ENCODE measurements at regions of chr10 and their contacts with region 1.

Region 1: DNA sequence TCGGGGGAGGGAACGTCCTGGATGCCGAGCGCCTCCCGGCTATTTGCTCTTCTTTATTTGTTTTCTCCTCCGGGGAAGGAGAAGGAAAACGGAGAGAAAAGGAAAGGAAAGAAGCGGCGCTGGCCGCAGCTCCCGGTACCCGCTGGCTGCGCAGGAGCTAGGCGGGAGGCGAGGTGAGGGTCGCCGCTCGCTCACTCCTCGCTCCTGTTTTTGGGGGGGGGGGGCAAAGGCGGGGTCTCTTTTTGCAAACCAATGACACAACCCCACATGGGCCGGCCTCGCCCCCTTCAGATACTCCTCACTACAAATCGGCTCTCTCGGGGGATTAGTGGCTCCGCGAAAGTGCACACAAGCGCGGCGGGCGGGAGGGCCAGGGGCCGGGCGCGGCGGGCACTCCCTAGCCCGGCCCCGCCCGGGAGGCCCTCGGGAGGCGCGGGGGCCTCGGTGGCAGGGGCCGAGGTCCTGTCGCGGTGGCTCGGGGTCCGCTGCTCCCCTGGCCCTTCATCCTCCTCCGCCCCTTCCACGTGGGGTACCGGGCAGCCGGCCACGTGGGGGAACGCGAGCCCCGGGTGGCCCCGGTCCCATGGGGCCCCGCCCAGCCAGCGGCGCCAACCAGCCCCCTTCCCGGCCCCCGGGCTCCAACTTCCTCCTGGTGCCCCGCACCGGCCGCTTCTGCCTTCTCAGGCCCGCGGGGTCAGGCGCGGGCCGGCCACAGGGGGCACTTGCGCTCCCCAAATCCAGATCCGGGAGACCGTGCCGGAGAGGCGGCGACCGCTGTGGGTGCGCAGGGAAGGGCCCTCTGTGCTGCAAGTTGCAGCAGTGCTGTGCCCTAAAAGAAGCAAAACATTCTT is 718 bp upstream of the CTBP2 start:
- H3K4me3 Mint-ChIP-seq: peak overlapping the region; percentile 87
- H3K27ac Mint-ChIP-seq: peak overlapping the region; percentile 89
- H3K4me1 Mint-ChIP-seq: peaks cover 14% of the 10 kb centered on the region
- H3K27me3 Mint-ChIP-seq: peaks cover 19% of the 10 kb centered on the region

Region 2: DNA sequence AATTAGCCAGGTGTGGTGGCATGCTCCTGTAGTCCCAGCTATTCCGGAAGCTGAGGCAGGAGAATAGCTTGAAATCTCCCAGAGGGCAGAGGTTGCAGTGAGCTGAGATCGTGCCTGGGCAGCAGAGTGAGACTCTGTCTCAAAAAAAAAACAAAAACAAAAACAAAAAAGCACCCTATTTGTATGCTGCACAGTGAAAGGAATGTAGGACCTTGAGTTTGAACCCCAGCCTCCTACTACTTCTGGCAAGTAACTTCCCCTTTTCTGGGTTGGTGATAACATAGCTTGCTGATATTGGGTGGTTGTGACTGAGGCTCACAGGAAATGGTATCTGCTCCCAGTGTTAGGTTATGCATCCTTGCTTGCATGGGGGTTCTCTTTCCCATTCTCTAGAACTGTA is 1801.5 kb before region 1 on chr10:
- intact Hi-C with region 1: no loop called
- H3K4me3 Mint-ChIP-seq: no peak overlapping the region
- H3K27ac Mint-ChIP-seq: no peak overlapping the region
- H3K4me1 Mint-ChIP-seq: no peaks in the 10 kb centered on the region
- H3K27me3 Mint-ChIP-seq: peaks cover 14% of the 10 kb centered on the region

Region 3: GRCh38 chr10:125048101-125048864 is 112.8 kb before region 1 on chr10:
- intact Hi-C with region 1: loop called (anchors 5 kb)
- H3K4me3 Mint-ChIP-seq: no peak overlapping the region
- H3K27ac Mint-ChIP-seq: no peak overlapping the region
- H3K4me1 Mint-ChIP-seq: peaks cover 51% of the 10 kb centered on the region
- H3K27me3 Mint-ChIP-seq: no peaks in the 10 kb centered on the region

Region 4: DNA sequence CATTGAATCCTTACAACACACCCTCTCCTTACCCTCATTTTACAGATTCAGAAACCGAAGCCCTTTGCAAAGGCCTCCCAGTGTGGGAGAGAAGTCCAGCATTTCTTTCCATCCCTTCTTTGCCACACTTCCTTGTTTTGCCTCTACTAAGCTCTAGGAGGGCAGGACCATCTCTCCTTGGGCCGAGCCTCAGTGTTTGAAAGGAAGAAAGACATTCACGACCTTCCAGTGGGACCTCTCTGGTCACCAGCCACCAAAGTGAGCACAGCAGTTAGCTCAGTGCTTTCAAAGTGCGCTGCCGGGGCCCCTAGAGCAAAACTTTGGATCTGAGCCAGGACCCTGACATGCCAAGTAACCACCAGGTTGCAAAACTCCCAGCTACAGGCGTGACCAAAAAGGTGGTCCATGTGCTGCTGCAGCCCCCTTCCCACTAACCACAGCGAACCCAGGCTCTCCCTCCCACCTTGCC is 13.1 kb before region 1 on chr10:
- intact Hi-C with region 1: loop called (anchors 1 kb)
- H3K4me3 Mint-ChIP-seq: peak overlapping the region; percentile 55
- H3K27ac Mint-ChIP-seq: peak overlapping the region; percentile 82
- H3K4me1 Mint-ChIP-seq: peaks cover 89% of the 10 kb centered on the region
- H3K27me3 Mint-ChIP-seq: no peaks in the 10 kb centered on the region

Region 5: DNA sequence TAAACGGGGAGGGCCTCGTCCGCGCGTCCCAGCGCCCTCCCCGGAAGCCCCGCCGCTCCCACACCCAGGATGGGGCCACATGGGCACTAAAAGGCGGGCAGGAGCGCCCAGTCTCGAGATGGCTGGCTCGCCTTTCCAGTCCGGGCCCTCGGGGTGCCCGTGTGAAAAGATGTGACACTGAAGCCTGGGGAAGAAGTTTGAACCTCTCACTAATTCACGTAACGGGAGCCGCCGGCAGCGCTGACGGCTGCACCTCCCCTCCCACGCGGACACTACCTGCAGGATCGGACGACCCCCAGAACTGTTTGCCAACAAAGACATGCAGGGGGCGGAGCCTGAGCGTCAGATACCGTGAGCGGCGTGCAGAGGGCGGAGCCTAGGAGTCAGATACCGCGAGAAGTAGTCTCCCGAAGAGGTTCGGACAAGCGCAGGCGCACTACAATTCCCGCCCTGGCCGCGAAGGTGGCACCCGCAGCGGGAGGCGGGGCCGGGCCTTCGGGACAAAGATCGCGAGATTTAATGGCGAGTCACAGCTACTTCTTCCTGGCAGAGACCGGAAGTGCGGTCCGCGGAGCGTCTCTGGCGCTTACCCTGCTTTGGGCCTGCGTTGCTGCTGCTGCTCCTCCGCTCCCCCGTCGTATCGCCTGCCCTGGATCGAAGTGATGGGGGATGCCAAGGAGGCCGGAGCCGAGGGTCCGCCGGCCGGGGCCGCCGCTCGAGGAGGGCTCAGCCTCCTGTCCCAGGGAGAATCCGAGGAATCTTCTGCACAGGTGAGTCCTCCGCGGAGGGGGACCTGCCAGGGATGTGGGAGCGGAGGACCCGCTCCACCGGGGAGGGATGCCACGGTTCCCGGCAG is 558.3 kb after region 1 on chr10 and contains the start of gene EDRF1:
- intact Hi-C with region 1: loop called (anchors 2 kb)
- H3K4me3 Mint-ChIP-seq: peak within 1 kb of the TSS; percentile 90
- H3K27ac Mint-ChIP-seq: peak within 1 kb of the TSS; percentile 89
- H3K4me1 Mint-ChIP-seq: peaks cover 5% of the 10 kb centered on the region
- H3K27me3 Mint-ChIP-seq: no peaks in the 10 kb centered on the region